ENCODE measurements at regions of chr15 and their contacts with region 1.

Region 1: DNA sequence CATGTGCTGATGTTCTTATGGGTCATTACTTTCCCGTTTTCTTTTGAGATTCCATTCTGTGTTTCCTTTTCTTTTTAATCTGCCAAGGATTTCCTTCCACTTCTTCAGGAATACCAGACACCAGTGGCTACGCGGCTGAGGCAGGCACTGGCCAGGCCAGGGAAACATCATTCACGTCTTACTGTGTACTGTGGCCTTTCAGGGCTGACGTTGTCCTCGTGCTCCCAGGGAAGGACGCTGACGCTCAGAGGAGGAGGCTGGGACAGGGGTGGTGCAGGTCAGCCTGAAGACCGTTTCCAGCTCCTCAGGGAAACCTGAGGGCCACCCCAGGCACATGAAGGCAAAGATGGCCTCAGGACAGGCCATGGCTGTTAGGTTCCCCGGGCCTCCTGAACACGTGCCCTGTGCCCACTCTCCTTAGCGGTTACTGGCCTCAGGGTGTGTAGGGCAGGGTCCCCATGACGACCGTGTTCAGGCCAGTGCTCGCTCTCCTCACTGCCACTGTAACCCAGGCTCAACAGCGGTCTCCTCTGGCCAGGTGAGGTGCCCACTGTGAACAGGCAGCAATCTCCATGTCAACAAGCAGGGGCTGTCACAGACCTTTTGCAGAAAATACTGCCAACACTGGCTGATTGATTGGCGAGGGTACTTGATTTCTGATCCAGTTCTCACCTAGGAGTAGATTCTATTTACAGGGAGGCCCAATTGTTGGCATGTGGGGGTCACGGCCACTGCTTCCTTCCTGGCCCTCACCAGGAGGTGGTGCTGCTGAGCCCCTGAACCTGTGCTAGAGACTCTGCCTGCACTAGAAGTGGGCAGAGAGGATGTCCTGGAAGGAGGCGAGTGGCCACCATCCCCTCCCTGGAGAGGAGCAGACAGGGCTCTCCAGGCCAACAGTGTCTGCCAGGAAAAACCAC is 169.5 kb downstream of the ATP10A start:
- DNase-seq: peak in 2 of 10 donors; percentile 38 to 39
- H3K4me3 ChIP-seq: no peak overlapping the region
- H3K27ac ChIP-seq: no peak overlapping the region
- H3K27me3 ChIP-seq: no peaks in the 10 kb centered on the region
- CTCF ChIP-seq: peak; percentile 16 to 71 (median 58)

Region 2: DNA sequence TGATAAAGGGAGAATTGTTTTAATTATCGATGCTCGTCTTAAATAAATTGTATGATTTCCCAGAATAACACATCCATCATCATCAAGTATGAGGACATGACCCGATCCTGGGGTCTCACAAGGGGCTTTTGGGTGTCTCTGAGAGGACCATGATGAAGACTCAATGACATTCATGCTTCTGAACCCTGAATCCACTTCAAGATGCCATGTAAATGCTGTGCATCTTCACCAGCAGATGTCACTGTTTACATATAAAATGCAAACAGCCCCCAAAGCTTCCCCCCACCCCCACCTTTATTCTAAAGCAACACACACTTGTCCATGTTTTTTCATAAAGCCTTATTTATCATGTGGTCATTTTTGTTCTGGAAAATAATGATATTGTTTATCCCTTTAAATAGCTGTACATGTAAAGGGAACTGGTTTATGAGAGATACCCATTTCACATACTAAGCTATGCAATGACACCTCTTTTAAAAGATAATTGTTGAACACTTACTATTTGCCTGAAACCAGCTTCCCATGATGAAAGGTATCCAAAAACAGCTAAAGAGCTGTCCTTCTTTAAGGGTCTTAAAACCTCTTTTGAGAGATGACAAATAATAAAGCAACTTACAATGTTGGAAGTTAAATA is 185.1 kb before region 1 on chr15:
- intact Hi-C with region 1: loop called in 1 of 2 experiments (anchors 5 kb)
- DNase-seq: peak in 2 of 10 donors; percentile 23 to 43
- H3K4me3 ChIP-seq: no peak overlapping the region
- H3K27ac ChIP-seq: no peak overlapping the region
- H3K27me3 ChIP-seq: no peaks in the 10 kb centered on the region
- CTCF ChIP-seq: peak; percentile 67 to 94 (median 81)

Region 3: DNA sequence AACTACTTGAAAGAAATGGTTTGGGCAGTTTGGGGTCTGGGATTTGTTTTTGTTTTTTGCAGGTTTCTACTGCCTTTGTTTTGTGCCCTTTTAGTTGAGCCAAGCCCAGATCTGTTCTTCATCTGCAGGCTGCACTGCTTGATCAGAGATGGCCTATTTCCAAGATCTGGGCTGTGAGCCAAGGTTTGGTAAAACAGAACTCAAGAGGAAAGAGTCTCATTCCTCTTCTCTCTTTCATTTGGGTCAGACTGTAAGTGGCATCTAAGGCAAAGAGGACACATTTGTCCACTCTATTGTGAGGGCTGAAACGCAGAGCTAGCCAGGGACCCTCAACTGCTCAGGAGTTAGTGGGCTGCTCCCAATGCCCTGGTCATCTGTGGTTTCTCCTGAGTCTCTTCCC is 150.4 kb before region 1 on chr15:
- intact Hi-C with region 1: loop called in 1 of 2 experiments (anchors 10 kb)
- DNase-seq: peak in 7 of 10 donors; percentile 56 to 80 (median 67)
- H3K4me3 ChIP-seq: no peak overlapping the region
- H3K27ac ChIP-seq: peak overlapping the region in 38 of 59 donors; percentile 4 to 75 (median 51)
- H3K27me3 ChIP-seq: no peaks in the 10 kb centered on the region
- CTCF ChIP-seq: peak in 5 of 56 donors; percentile 9 to 32 (median 15)

Region 4: DNA sequence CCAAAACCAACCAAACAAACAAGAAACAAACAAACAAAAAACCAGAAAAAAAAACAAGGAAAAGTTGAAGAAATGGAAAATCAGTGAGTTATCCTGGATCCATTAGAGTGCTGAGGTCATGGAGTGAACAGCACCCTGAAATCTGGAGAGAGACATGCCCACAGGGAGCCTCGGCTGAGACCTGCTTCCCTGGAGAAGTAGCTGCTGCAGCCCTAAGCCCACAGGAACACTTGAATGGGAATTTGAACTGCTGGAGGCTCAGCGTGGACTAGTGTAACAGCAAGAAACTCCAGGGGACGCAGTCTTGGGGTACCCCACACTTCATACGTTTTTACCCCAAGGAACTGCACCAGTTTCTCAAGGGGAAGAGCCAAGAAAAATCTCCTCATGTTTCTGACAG is 110.7 kb before region 1 on chr15:
- intact Hi-C with region 1: no loop called
- DNase-seq: no peak
- H3K4me3 ChIP-seq: no peak overlapping the region
- H3K27ac ChIP-seq: no peak overlapping the region
- H3K27me3 ChIP-seq: no peaks in the 10 kb centered on the region
- CTCF ChIP-seq: no peak

Region 5: DNA sequence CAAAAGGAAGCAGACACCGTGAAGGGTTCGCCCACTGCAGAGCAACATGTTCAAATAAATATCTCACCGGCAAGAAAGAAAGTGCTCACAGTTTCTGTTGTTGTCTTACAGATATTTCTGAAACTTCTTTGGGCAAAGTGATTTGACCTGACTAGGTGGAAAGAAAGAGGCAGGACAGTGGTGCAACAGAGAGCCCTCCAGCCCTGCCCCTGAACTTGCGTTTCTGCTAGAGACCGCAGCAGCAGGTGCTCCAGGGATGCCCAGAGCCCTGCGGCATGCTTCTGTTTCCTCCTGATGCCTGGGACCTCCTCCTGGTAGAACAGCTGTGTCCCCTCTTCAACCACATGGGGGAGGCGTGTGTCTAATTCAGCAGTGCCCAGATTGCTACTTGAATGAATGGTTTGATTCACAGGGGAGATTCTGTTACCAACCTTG is 46.1 kb after region 1 on chr15:
- intact Hi-C with region 1: loop called in 1 of 2 experiments (anchors 5 kb)
- DNase-seq: peak in 1 of 10 donors; percentile 55
- H3K4me3 ChIP-seq: no peak overlapping the region
- H3K27ac ChIP-seq: no peak overlapping the region
- H3K27me3 ChIP-seq: peaks cover 0 to 13% (median 0%) of the 10 kb centered on the region in 45 donors
- CTCF ChIP-seq: peak in 37 of 56 donors; percentile 8 to 46 (median 28)